CD4-positive, alpha-beta memory T cell (primary cell): ENCODE measurements at regions of chr14 and their contacts with region 1.

Region 1: DNA sequence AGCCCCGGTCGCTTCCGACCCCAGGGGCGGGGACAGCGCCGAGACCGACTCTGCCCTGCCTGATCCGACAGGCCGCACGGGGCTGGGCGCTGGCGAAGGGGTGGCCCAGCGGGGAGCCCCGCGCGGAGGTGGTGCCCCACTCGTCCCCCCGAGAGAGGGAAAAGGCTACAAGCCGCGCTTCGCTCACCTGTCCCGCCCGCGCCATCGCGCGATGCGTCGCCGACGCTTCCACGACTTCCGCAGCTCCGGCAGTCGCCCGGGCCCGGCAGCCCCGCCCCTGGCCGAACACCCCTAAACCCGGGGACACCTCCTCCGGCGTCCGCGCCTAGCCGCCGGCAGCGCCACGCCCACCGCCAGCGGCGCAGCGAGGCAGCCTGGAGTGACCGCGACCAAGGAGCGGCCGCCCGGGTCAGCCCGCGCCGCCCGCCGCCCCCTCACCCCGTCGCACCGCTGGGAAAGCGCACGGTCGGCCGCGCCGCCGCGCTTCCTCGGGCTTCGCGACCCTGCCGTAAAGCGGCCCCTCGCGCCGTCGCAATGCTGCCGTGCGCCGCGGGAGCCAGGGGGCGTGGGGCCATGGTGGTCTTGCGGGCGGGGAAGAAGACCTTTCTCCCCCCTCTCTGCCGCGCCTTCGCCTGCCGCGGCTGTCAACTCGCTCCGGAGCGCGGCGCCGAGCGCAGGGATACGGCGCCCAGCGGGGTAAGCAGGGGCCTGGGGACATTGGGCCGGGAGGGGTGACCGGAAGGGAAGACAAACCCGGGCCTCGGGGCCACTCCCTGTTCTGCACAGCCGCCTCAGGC is at the starts of genes BAG5 and COA8:
- DNase-seq: peak; percentile 88 to 93 (median 89)
- H3K4me3 ChIP-seq: peak within 1 kb of the TSS; percentile 84
- H3K4me3 Mint-ChIP-seq: peak within 1 kb of the TSS; percentile 93 to 98 (median 94)
- H3K27ac ChIP-seq: peak within 1 kb of the TSS; percentile 81
- H3K27ac Mint-ChIP-seq: peak within 1 kb of the TSS; percentile 93 to 98 (median 96)
- H3K4me1 ChIP-seq: peaks cover 56% of the 10 kb centered on the region
- H3K4me1 Mint-ChIP-seq: peaks cover 31 to 74% (median 56%) of the 10 kb centered on the region in 4 donors
- H3K27me3 ChIP-seq: no peaks in the 10 kb centered on the region
- H3K27me3 Mint-ChIP-seq: no peaks in the 10 kb centered on the region
- total RNA-seq, gene BAG5: 37.0 to 37.1 TPM
- total RNA-seq, gene COA8: 26.1 to 29.2 TPM

Region 2: DNA sequence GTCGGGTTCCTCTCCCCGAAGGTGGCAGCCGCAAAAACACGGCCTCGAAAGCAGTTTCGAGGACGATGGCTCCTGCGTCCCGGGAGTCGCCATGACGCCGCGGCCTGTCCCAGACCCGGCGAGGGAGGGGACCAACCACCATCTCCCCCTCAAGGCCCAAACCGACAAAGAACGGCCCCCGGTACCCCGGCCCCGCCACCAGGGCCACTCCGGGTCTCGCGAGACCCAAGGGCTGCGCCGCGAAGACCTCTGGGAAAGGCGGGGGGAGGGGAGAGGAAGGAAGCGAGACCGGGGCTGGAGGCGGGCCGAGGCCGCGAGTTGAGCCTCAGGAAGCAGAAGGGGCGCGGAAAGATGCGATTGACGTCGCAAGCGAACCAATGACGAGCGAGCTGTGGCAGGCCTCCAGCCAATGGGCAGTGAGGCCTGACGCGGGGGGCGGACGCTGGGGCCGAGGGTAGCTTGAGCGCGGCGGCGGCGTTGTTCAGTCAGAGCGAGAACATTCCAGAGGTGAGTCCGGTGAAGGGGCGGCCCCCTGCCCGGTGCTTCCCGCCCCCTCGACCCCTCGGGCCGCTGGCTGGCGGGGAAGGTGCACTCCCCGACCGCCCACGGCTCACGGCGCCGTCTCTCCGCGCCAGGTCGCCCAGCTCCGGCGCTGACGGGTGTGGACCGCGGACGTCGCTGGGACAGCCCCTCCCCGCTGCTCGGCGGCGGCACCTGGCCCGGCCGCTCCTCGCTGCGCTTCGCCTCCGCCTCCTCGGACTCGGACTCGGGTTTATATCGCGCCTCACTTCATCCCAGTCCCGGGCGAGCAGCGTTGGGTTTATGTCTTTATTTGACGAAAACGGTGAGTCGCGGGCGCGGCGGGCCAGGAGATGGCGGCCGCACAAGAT is 228.6 kb before region 1 on chr14 and contains the start of gene EIF5:
- CTCF ChIA-PET with region 1: no interaction called
- POLR2A ChIA-PET with region 1: no interaction called
- intact Hi-C with region 1: loop called (anchors 1 kb)
- DNase-seq: peak; percentile 99
- H3K4me3 ChIP-seq: peak within 1 kb of the TSS; percentile 82 to 94
- H3K4me3 Mint-ChIP-seq: peak within 1 kb of the TSS; percentile 93 to 99 (median 96)
- H3K27ac ChIP-seq: peak within 1 kb of the TSS; percentile 93
- H3K27ac Mint-ChIP-seq: peak within 1 kb of the TSS; percentile 96 to 99 (median 98)
- H3K4me1 ChIP-seq: peaks cover 39% of the 10 kb centered on the region
- H3K4me1 Mint-ChIP-seq: peaks cover 20 to 52% (median 36%) of the 10 kb centered on the region in 4 donors
- H3K27me3 ChIP-seq: no peaks in the 10 kb centered on the region
- H3K27me3 Mint-ChIP-seq: no peaks in the 10 kb centered on the region
- total RNA-seq, gene EIF5: 265 to 269 TPM

Region 3: DNA sequence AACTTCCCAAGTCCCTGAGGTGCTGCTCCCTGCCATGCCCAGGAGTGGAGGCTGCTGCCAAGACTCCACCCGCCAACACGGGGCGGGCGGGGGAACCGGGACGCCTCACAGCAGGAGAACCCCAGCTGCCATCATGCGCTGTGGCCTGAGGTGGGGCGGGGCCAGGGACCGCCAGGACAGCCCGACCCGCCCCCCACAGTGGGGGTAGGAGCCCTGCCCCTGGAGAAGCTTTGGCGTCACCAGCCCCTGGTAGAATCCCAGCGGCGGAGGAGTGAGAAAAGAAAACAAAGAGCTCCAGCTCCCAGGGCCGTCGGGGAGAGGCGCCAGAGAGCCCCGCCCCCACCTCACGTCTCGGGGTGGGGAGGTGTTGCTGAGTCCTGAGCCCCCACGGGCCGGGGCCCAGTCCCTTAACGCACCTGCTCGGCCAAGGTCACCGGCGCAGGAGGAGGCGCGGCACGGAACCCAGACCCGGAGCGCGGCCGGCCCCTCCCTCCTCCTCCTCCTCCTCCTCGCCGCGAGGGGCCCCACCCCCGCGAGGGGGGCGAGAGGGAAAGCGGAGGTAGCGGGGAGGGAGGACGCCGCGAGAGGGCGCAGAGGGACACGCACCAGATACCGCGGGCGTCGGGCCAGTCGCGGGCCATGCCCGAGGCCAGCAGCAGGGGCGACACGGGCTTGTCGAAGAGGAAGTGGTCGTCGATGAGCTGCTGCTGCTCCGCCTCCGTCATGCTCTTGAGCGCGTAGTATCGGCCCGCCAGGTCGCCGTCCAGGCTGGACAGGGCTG is 41.8 kb before region 1 on chr14:
- CTCF ChIA-PET with region 1: interaction called, 6 read pairs
- POLR2A ChIA-PET with region 1: interaction called, 13 read pairs
- intact Hi-C with region 1: no loop called
- DNase-seq: peak; percentile 59 to 76 (median 63)
- H3K4me3 ChIP-seq: peak overlapping the region in 1 of 2 donors; percentile 52
- H3K4me3 Mint-ChIP-seq: peak overlapping the region; percentile 39 to 77 (median 66)
- H3K27ac ChIP-seq: no peak overlapping the region
- H3K27ac Mint-ChIP-seq: no peak overlapping the region
- H3K4me1 ChIP-seq: peaks cover 22% of the 10 kb centered on the region
- H3K4me1 Mint-ChIP-seq: peaks cover 0 to 21% (median 8%) of the 10 kb centered on the region in 4 donors
- H3K27me3 ChIP-seq: no peaks in the 10 kb centered on the region
- H3K27me3 Mint-ChIP-seq: peaks cover 3% of the 10 kb centered on the region in 2 donors

Region 4: DNA sequence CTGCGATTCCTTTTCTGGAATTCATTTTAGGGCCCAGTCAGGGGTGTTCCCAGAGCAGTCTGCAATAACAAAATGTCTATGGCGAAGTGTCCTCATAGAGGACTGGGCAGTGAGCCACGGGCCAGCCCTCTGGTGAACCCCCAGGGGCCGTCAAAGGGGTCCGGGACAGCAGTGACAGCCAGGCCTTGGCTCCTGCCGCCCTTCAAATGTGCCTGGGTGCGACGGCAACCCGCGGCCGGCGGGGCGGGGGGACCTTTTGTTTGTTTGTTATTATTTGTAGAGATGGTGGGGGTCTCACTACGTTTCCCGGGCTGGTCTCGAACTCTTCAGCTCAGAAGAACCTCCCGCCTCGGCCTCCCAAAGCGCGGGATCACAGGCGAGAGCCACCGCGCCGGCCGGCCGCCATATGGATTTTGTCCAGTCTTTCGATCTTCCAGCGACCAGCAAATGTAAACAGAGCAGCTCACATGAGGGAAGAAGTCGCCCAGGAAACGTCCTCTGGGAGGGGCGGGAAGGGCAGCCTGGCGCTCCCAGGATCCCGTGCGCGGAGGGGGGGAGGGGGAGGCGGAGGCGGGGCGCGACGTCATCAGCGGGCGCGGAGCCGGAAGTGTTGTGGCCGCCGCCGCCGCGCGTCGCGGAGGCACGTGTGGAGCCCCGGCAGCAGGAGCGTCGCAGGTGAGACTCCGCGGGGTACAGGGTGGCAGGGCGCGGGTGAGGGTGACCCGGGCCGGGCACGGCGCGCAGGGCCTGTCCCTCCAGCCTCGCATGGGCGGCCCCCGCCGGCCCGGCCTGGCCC is 33.8 kb before region 1 on chr14 and contains the start of gene TRMT61A:
- CTCF ChIA-PET with region 1: no interaction called
- POLR2A ChIA-PET with region 1: interaction called, 31 read pairs
- intact Hi-C with region 1: loop called (anchors 2 kb)
- DNase-seq: peak; percentile 72 to 77 (median 74)
- H3K4me3 ChIP-seq: peak within 1 kb of the TSS; percentile 71 to 93
- H3K4me3 Mint-ChIP-seq: peak within 1 kb of the TSS; percentile 91 to 96 (median 93)
- H3K27ac ChIP-seq: peak within 1 kb of the TSS; percentile 76
- H3K27ac Mint-ChIP-seq: peak within 1 kb of the TSS; percentile 95 to 97 (median 96)
- H3K4me1 ChIP-seq: peaks cover 30% of the 10 kb centered on the region
- H3K4me1 Mint-ChIP-seq: peaks cover 17 to 53% (median 26%) of the 10 kb centered on the region in 4 donors
- H3K27me3 ChIP-seq: no peaks in the 10 kb centered on the region
- H3K27me3 Mint-ChIP-seq: no peaks in the 10 kb centered on the region
- total RNA-seq, gene TRMT61A: 14.0 TPM

Region 5: DNA sequence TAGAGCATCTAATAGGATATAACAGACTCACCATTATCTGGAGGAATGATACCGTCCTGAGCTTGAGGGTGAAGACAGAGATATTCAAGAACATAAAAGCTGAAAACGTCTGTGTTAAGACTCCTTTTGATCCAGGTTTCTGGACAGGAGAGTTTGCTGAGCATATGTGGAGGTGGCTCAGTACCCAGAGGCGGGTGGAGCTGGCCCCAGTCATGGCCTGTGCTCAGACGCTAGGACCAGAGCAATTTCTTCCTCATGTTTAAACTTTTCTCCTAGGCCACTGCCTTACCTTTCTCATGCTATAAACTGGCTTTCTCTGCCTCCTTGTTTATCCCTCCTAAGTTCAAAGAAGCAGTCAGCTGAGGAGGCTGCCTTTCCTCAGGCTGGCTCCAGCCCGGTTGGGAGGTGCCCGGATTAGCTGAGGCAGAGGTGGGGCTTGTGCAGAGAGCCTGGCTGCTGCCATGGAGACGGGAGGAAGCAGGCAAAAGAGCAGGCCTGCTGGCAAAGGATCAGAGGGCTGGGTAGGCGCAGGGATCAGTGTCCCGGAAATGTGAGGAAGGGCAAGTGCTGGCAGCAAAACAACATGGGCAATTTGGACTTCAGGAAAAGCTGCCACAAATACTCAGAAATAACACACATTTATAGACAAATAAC is 13.9 kb after region 1 on chr14:
- CTCF ChIA-PET with region 1: no interaction called
- POLR2A ChIA-PET with region 1: no interaction called
- intact Hi-C with region 1: no loop called
- DNase-seq: no peak
- H3K4me3 ChIP-seq: no peak overlapping the region
- H3K4me3 Mint-ChIP-seq: no peak overlapping the region
- H3K27ac ChIP-seq: no peak overlapping the region
- H3K27ac Mint-ChIP-seq: no peak overlapping the region
- H3K4me1 ChIP-seq: no peaks in the 10 kb centered on the region
- H3K4me1 Mint-ChIP-seq: peaks cover 0 to 2% (median 0%) of the 10 kb centered on the region in 4 donors
- H3K27me3 ChIP-seq: no peaks in the 10 kb centered on the region
- H3K27me3 Mint-ChIP-seq: no peaks in the 10 kb centered on the region

Region 6: DNA sequence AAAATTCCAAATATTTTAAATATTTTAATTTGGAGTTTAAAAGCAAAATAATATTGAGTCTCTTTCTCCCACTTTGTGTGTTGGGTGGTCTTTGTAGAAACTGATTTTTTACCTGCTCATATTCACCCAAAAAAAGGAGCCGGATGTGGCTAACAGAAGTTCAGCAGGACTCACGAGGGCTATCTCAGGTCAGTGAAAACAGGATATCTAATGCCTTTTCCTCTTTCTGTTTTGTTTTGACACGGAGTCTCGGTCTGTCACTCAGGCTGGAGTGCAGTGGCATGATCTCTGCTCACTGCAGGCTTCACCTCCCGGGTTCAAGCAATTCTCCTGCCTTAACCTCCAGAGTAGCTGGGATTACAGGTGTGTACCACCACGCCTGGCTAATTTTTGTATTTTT is 30.9 kb after region 1 on chr14:
- CTCF ChIA-PET with region 1: no interaction called
- POLR2A ChIA-PET with region 1: no interaction called
- intact Hi-C with region 1: no loop called
- DNase-seq: no peak
- H3K4me3 ChIP-seq: no peak overlapping the region
- H3K4me3 Mint-ChIP-seq: peak overlapping the region in 4 of 8 donors; percentile 31 to 67 (median 38)
- H3K27ac ChIP-seq: no peak overlapping the region
- H3K27ac Mint-ChIP-seq: peak overlapping the region in 2 of 7 donors; percentile 29 to 70
- H3K4me1 ChIP-seq: no peaks in the 10 kb centered on the region
- H3K4me1 Mint-ChIP-seq: peaks cover 0 to 5% (median 1%) of the 10 kb centered on the region in 4 donors
- H3K27me3 ChIP-seq: no peaks in the 10 kb centered on the region
- H3K27me3 Mint-ChIP-seq: no peaks in the 10 kb centered on the region

Region 7: DNA sequence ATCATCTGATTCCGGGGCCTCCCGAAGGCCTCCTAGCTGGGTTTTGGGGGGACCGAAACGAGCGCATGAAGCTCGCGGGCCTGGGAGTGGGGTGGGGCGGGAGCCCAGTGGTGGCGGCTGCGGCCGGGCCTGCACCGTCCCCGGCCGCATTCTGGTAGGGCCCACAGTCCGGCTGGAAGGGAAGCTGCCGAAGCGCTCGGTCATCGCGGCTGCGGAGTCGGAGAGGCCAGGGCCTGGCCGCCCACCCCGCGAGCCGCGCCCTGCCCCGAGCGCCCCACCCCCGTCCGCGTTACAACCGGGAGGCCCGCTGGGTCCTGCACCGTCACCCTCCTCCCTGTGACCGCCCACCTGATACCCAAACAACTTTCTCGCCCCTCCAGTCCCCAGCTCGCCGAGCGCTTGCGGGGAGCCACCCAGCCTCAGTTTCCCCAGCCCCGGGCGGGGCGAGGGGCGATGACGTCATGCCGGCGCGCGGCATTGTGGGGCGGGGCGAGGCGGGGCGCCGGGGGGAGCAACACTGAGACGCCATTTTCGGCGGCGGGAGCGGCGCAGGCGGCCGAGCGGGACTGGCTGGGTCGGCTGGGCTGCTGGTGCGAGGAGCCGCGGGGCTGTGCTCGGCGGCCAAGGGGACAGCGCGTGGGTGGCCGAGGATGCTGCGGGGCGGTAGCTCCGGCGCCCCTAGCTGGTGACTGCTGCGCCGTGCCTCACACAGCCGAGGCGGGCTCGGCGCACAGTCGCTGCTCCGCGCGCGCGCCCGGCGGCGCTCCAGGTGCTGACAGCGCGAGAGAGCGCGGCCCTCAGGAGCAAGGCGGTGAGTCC is 66.3 kb after region 1 on chr14 and contains the start of gene KLC1:
- CTCF ChIA-PET with region 1: interaction called, 3 read pairs
- POLR2A ChIA-PET with region 1: interaction called, 7 read pairs
- intact Hi-C with region 1: loop called (anchors 2 kb)
- DNase-seq: peak; percentile 75 to 86 (median 80)
- H3K4me3 ChIP-seq: peak within 1 kb of the TSS; percentile 52 to 85
- H3K4me3 Mint-ChIP-seq: peak within 1 kb of the TSS; percentile 85 to 90 (median 87)
- H3K27ac ChIP-seq: peak within 1 kb of the TSS; percentile 89
- H3K27ac Mint-ChIP-seq: peak within 1 kb of the TSS; percentile 81 to 95 (median 92)
- H3K4me1 ChIP-seq: peaks cover 62% of the 10 kb centered on the region
- H3K4me1 Mint-ChIP-seq: peaks cover 22 to 60% (median 37%) of the 10 kb centered on the region in 4 donors
- H3K27me3 ChIP-seq: no peaks in the 10 kb centered on the region
- H3K27me3 Mint-ChIP-seq: no peaks in the 10 kb centered on the region
- total RNA-seq, gene KLC1: 242 to 278 TPM

Region 8: GRCh38 chr14:103715052-103716000 is 152.7 kb after region 1 on chr14 and contains the starts of genes XRCC3 and ZFYVE21:
- CTCF ChIA-PET with region 1: no interaction called
- POLR2A ChIA-PET with region 1: interaction called, 6 read pairs
- intact Hi-C with region 1: loop called (anchors 1 kb)
- DNase-seq: peak; percentile 100
- H3K4me3 ChIP-seq: peak within 1 kb of the TSS; percentile 12 to 60
- H3K4me3 Mint-ChIP-seq: peak within 1 kb of the TSS; percentile 89 to 95 (median 93)
- H3K27ac ChIP-seq: peak within 1 kb of the TSS; percentile 49
- H3K27ac Mint-ChIP-seq: peak within 1 kb of the TSS; percentile 86 to 98 (median 93)
- H3K4me1 ChIP-seq: peaks cover 21% of the 10 kb centered on the region
- H3K4me1 Mint-ChIP-seq: peaks cover 17 to 72% (median 40%) of the 10 kb centered on the region in 4 donors
- H3K27me3 ChIP-seq: no peaks in the 10 kb centered on the region
- H3K27me3 Mint-ChIP-seq: no peaks in the 10 kb centered on the region
- total RNA-seq, gene XRCC3: 10.3 to 12.6 TPM
- total RNA-seq, gene ZFYVE21: 17.4 to 18.8 TPM